Activated CD8-positive, alpha-beta memory T cell treated with anti-CD3 and anti-CD28 coated beads, Interleukin-2, amount 10 ng/mL, durations not matched to agents 7 days and 5 days (primary cell): ENCODE measurements at regions of chr2 and their contacts with region 1.

Region 1: GRCh38 chr2:237512774-237513466 is 25.9 kb downstream of the MLPH start:
- DNase-seq: peak; percentile 81
- ATAC-seq: peak; percentile 70
- H3K4me3 Mint-ChIP-seq: no peak overlapping the region
- H3K27ac Mint-ChIP-seq: no peak overlapping the region
- H3K4me1 Mint-ChIP-seq: no peaks in the 10 kb centered on the region
- H3K27me3 Mint-ChIP-seq: peaks cover 9% of the 10 kb centered on the region

Region 2: DNA sequence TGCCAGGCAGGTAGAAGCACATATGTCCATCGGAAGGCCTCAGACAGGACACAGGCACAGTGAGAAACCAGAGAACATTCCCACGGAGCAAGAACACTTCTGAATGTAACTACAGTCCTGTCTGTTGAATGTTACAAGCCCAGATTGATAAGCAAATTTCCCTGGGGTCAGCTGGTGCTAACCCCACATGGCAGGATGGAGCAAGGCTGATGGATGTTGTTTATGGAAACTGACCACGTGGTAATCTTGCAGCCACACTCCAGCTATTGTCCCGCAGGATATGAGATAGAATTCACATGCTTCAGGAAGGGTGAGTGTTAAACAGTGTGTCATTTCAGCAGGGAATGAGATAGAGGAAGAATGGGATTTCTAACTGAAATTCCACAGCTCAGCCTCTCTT is 566.0 kb before region 1 on chr2:
- CTCF ChIA-PET with region 1: no interaction called
- DNase-seq: no peak
- ATAC-seq: no peak
- H3K4me3 Mint-ChIP-seq: no peak overlapping the region
- H3K27ac Mint-ChIP-seq: no peak overlapping the region
- H3K4me1 Mint-ChIP-seq: peaks cover 4% of the 10 kb centered on the region
- H3K27me3 Mint-ChIP-seq: no peaks in the 10 kb centered on the region

Region 3: DNA sequence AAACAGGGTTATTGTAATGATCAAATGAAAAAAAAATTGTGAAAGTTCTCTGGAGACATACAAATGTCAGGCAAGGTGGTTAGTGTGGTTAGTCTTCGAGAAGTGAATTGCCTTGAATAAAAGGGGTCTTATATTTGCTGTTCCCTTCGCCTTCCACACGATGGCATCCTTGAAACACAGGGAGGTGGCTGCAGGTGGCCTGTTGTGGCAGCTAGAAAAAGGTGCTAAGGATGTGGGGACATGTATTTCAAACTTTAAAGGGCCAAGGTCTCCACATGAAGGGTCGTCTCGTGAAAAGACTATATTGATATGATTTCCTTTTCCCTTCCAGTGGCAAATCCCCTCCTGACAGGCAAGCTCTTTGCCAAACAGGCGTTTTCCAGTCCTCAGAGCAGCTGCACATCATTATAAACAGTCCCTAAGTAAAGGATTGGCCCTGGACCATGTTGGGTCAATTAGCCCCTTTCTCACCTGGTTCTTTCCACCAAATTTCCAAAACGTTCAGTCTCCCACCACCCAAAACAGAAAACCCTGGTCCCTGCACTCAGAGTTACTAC is 358.8 kb before region 1 on chr2:
- CTCF ChIA-PET with region 1: interaction called, 11 read pairs
- DNase-seq: peak; percentile 71
- ATAC-seq: peak; percentile 34
- H3K4me3 Mint-ChIP-seq: no peak overlapping the region
- H3K27ac Mint-ChIP-seq: no peak overlapping the region
- H3K4me1 Mint-ChIP-seq: peaks cover 38% of the 10 kb centered on the region
- H3K27me3 Mint-ChIP-seq: no peaks in the 10 kb centered on the region

Region 4: DNA sequence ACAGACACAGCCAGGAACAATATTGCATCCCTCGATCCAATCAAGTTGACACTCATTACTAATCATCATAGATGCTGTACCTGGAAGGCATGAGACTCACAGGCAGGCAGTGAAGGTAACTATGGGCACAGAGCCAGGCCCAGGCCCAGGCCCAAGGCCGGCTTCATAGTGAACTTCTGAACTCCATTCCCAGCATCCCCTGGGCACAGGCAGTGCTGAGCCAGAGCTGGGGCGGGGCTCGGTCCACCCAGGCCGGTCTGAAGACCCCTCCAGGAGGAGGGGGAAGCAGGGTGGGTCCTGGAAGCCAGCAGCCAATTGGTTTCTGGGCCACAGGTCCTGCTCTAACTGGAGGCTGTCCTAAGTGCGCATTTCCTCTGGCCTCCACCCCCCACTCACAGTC is 11.7 kb after region 1 on chr2:
- CTCF ChIA-PET with region 1: interaction called, 10 read pairs
- DNase-seq: no peak
- ATAC-seq: no peak
- H3K4me3 Mint-ChIP-seq: no peak overlapping the region
- H3K27ac Mint-ChIP-seq: no peak overlapping the region
- H3K4me1 Mint-ChIP-seq: no peaks in the 10 kb centered on the region
- H3K27me3 Mint-ChIP-seq: no peaks in the 10 kb centered on the region

Region 5: DNA sequence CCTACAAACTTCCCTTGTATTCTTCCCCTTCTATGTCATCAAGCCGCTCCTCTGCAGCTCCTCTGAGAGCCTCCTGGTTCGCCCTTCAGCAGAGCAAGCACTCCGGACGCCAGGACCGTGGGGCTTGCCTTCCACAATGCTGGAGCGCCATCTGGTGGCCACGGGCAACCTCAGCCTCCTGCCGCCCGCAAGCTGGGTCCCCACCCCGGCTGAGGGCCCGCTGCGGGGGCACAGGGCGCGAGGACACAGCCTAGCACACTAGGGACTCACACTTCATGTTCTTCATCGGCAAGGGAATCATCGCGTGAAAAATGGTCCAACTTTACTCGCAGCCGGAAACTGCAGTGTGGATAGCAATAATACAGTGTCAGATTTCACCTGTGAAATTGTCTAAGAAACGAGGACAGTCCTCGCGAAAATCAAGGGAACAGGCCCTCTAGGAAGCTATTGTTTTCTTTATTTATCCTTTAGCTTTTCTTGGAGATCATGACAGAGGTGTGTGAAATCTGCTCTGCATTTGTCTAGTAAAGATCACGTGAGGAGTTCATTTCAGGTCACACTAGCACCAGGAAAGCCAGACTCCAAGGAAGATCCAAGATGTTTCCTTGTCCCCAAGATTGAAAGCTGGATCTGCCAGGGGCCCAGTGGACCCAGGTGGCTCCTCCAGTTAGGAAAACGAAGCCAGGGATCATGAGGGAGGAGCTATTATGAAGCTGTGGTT is 59.3 kb after region 1 on chr2:
- CTCF ChIA-PET with region 1: interaction called, 127 read pairs
- DNase-seq: peak; percentile 86
- ATAC-seq: peak; percentile 95
- H3K4me3 Mint-ChIP-seq: no peak overlapping the region
- H3K27ac Mint-ChIP-seq: no peak overlapping the region
- H3K4me1 Mint-ChIP-seq: no peaks in the 10 kb centered on the region
- H3K27me3 Mint-ChIP-seq: peaks cover 8% of the 10 kb centered on the region

Region 6: DNA sequence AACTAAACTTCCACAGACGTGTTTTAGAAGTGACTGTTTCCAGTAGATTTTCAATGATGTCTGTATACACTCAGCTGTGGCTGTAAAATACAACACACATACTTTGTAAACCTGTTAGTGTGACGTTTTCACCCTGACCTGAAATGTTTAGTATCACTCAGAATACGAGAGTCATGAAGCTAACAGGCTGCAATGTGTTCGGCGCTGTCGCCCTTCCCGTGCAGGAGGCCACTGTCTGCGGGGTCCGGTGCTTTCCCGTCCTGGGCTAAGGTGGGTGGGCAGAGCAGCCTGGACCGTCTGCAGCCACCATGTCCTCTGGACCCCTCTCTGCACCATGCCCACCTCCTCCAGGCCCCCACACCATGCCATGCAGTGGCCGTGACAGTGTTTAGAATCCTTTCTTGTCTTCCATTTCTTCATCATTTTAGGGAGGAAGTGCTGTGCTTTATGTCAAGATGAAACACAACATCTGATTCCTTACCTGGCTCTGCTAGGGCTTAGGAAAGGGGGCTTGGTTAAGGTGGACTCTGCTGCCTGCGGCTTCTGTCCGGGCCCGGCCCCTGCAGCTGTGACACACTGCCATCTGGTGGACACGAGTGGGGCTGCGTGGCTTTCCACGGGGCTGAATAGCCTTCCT is 231.8 kb after region 1 on chr2:
- CTCF ChIA-PET with region 1: interaction called, 13 read pairs
- DNase-seq: peak; percentile 78
- ATAC-seq: peak; percentile 86
- H3K4me3 Mint-ChIP-seq: no peak overlapping the region
- H3K27ac Mint-ChIP-seq: peak overlapping the region; percentile 41
- H3K4me1 Mint-ChIP-seq: peaks cover 19% of the 10 kb centered on the region
- H3K27me3 Mint-ChIP-seq: no peaks in the 10 kb centered on the region